Left cardiac atrium (tissue), 4 donors: ENCODE measurements at regions of chr4 and their contacts with region 1.

Region 1: GRCh38 chr4:176340871-176341685 is 21.3 kb downstream of the SPCS3 start:
- DNase-seq: no peak
- ATAC-seq: peak; percentile 53 to 68

Region 2: DNA sequence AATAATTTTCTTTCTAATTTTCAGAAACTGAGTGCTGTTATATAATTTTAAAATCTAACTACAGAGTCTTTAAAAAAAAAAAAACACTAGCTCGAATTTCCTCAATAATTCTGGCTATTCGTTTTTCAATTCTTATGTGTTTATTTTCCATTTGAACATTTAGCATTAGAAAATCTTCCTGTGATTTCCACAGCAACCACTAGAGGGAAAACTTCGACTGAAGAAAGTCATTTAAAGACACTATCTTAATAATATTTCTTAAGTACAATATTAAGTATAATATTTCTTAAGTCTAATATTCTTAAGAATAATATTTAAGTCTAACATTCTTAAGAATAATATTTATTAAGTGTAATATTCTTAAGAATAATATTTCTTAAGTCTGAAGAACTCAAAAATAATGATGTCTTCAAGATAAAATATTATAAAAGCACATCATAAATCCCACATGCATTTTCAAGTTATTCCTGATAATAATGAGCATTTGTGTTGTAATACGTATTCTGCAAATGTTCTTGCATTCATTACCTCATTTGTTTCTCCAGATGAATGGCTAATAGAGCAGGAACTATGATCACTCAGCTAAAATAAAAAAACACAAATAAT is 393.9 kb before region 1 on chr4:
- intact Hi-C with region 1: loop called in 1 of 2 experiments (anchors 2 kb)
- DNase-seq: no peak
- ATAC-seq: no peak

Region 3: DNA sequence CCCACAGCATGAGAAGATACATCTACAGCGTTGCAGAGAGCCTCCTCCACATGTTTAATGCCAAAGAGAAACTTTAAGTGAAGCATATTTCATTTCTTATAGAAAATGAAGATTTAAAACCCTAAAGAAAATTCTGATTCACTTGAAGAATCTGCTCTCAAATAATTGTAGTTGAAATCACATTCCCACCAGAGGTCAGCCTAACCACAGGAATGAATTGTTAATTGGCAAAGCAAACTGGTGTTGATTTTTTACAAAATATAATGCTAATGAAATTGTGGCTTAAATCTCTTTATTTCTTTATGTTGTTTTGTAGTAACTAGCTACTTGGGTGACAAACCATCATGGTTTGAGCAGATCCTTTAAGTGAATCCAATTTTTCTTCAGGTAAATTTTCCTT is 306.6 kb before region 1 on chr4:
- intact Hi-C with region 1: loop called (anchors 5 to 10 kb)
- DNase-seq: no peak
- ATAC-seq: peak in 1 of 2 donors; percentile 34